Activated CD4-positive, alpha-beta memory T cell treated with anti-CD3 and anti-CD28 coated beads for 36 hours (primary cell): ENCODE measurements at regions of chr12 and their contacts with region 1.

Region 1: GRCh38 chr12:10673660-10674384 is at the start of gene STYK1:
- DNase-seq: peak; percentile 78
- H3K4me3 Mint-ChIP-seq: peak within 1 kb of the TSS; percentile 67
- H3K27ac Mint-ChIP-seq: no peak within 1 kb of the TSS
- H3K4me1 Mint-ChIP-seq: peaks cover 26% of the 10 kb centered on the region
- H3K27me3 Mint-ChIP-seq: peaks cover 38% of the 10 kb centered on the region
- total RNA-seq, gene STYK1: not detected

Region 2: GRCh38 chr12:10235761-10236631 is 437.8 kb before region 1 on chr12:
- CTCF ChIA-PET with region 1: interaction called, 5 read pairs
- POLR2A ChIA-PET with region 1: no interaction called
- intact Hi-C with region 1: loop called (anchors 1 kb)
- DNase-seq: peak; percentile 47
- H3K4me3 Mint-ChIP-seq: no peak overlapping the region
- H3K27ac Mint-ChIP-seq: no peak overlapping the region
- H3K4me1 Mint-ChIP-seq: no peaks in the 10 kb centered on the region
- H3K27me3 Mint-ChIP-seq: peaks cover 3% of the 10 kb centered on the region

Region 3: DNA sequence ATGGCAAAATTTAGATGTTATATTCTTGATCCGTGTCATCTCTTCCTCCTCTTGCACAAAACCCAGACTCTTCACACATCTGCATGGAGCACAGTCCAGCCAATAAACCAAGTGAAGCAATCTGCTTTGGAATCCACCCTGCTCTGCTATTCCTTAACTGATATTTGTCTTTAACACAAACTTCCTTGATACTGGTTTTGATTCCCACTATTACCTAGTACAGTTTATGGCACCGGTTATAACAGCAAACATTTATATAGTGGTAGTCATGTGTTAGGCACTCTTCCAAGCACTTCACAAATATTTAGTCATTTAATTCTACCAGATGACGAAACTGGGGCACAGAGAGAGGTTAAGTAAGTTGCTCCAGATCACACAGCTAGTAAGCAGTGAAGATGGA is 12.5 kb before region 1 on chr12:
- CTCF ChIA-PET with region 1: no interaction called
- POLR2A ChIA-PET with region 1: no interaction called
- intact Hi-C with region 1: no loop called
- DNase-seq: no peak
- H3K4me3 Mint-ChIP-seq: no peak overlapping the region
- H3K27ac Mint-ChIP-seq: no peak overlapping the region
- H3K4me1 Mint-ChIP-seq: no peaks in the 10 kb centered on the region
- H3K27me3 Mint-ChIP-seq: peaks cover 12% of the 10 kb centered on the region

Region 4: GRCh38 chr12:10721651-10722501 is 48.1 kb after region 1 on chr12:
- CTCF ChIA-PET with region 1: no interaction called
- POLR2A ChIA-PET with region 1: no interaction called
- intact Hi-C with region 1: loop called (anchors 2 kb)
- DNase-seq: peak; percentile 69
- H3K4me3 Mint-ChIP-seq: peak overlapping the region; percentile 93
- H3K27ac Mint-ChIP-seq: peak overlapping the region; percentile 86
- H3K4me1 Mint-ChIP-seq: peaks cover 20% of the 10 kb centered on the region
- H3K27me3 Mint-ChIP-seq: peaks cover 53% of the 10 kb centered on the region

Region 5: DNA sequence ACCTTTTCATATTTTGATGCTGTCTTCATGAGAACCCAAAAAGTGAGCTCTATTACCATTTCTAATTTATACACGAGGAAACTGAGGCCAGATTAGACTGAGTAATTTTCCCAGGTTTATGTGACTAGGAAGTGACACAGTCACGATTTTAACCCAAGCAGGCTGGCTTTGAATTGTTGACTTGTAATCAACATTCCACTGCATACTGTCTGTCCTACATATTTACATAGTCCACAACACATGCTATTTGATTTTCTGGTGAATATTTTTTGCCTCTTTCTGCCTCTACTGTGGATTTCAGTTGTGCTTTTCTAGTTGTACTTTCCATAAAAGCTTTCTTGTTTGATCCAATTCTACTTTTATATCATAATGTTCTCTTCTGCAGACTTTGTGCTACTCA is 120.4 kb after region 1 on chr12:
- CTCF ChIA-PET with region 1: no interaction called
- POLR2A ChIA-PET with region 1: no interaction called
- intact Hi-C with region 1: no loop called
- DNase-seq: no peak
- H3K4me3 Mint-ChIP-seq: no peak overlapping the region
- H3K27ac Mint-ChIP-seq: no peak overlapping the region
- H3K4me1 Mint-ChIP-seq: no peaks in the 10 kb centered on the region
- H3K27me3 Mint-ChIP-seq: peaks cover 10% of the 10 kb centered on the region